HepG2 (cell line): ENCODE measurements at regions of chr2 and their contacts with region 1.

Region 1: DNA sequence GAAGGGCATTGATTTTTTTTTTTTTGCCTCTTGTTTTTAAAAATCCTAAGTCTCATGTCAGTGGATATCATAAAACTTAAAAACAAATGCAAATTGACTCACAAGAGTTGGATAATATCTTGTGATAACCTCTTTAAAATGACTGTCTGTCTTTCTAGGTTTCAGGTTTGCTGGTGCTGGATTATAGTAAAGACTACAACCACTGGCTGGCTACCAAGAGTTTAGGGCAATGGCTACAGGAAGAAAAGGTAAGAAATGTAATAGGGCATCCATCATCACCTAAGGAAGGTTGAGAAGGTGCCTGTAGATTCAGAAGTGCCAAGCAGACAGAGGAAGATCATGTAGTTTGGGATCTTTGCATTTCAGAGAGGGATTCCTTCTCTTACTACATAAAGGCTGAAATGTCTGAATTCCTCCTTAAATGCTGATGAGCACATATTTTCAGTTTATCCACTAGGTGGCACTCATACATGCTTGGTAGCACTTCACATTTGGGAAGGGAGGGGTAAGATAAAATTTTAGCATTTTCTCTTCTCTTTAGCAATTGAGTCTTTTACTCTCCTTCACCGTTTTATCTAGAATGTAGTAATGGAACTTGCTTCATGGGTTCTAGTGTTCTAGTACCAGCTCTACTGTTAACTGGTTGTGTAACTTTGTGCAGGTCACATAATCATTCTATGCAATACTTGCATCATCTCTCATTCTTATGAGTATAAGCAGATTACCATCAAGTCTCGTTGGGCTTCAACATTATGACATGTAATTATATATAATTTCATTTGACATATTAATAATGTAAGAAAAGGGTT is 21.1 kb downstream of the CPS1 start:
- DNase-seq: peak; percentile 56
- ATAC-seq: peak; percentile 90
- H3K4me3 ChIP-seq: no peak overlapping the region
- H3K27ac ChIP-seq: no peak overlapping the region
- H3K4me1 ChIP-seq: no peaks in the 10 kb centered on the region
- H3K27me3 ChIP-seq: no peaks in the 10 kb centered on the region
- CTCF ChIP-seq: peak; percentile 83
- EP300 ChIP-seq: no peak
- POLR2A ChIP-seq: no peak
- RAD21 ChIP-seq: no peak

Region 2: DNA sequence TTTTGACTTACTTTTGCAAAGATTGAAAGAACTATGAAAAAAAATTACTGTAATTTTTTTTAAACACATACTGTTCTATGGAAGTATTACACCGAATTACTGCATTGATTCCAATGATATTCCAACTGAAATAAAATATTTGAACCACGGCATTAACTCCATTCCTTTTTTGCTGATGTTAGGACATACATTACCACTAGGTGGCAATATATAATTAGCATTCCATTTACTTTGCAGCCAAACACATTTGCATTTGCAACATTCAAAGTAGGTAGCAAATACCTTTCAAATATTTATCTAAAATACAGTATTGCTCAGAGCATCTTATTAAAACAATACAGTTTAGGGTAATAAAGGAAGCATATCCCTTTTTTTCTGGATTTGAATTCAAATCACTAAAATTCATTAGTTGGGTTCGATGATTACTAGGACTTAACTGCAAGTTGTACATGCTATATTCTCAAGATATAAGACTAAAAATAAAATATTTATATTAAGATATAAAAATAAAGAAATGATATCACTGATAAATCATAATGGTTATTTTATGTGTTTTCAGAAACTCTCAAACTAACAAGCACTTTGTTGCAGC is 132.3 kb before region 1 on chr2:
- CTCF ChIA-PET with region 1: no interaction called
- POLR2A ChIA-PET with region 1: no interaction called
- in situ Hi-C with region 1: no loop called
- intact Hi-C with region 1: loop called (anchors 2 kb)
- DNase-seq: peak; percentile 18
- ATAC-seq: no peak
- H3K4me3 ChIP-seq: no peak overlapping the region
- H3K27ac ChIP-seq: no peak overlapping the region
- H3K4me1 ChIP-seq: 0 out of 2 replicates have a peak, but pooled peaks cover 5% of the 10 kb centered on the region
- H3K27me3 ChIP-seq: no peaks in the 10 kb centered on the region
- CTCF ChIP-seq: peak; percentile 65
- EP300 ChIP-seq: no peak
- POLR2A ChIP-seq: no peak
- RAD21 ChIP-seq: 0 out of 2 replicates have a peak, but pooled peaks have one; percentile 38

Region 3: DNA sequence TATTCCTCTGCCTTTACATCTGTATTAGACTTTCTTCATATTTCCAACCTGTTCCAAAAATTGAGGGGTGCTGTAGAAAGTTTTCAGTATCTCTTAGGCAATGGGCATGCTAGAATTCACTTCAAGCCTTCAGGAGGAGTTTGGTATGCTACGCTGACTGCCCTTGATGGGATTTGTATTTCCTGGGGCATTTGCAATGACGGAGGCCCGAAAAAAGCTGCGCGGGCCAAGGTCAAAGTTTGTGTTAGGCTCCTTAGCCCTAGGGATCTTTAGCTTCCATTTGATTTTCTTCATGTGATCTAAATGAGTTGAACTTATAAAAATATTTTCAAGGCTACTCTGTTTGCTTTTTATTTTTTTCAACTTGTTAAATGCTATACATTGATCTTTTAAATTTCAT is 16.0 kb before region 1 on chr2:
- CTCF ChIA-PET with region 1: no interaction called
- POLR2A ChIA-PET with region 1: no interaction called
- in situ Hi-C with region 1: no loop called
- intact Hi-C with region 1: loop called (anchors 1 kb)
- DNase-seq: no peak
- ATAC-seq: no peak
- H3K4me3 ChIP-seq: no peak overlapping the region
- H3K27ac ChIP-seq: no peak overlapping the region
- H3K4me1 ChIP-seq: peaks cover 8% of the 10 kb centered on the region
- H3K27me3 ChIP-seq: no peaks in the 10 kb centered on the region
- CTCF ChIP-seq: no peak
- EP300 ChIP-seq: no peak
- POLR2A ChIP-seq: no peak
- RAD21 ChIP-seq: no peak